ENCODE measurements at regions of chr14 and their contacts with region 1.

Region 1: GRCh38 chr14:104563742-104564615 is 15.6 kb upstream of the C14orf180 start:
- DNase-seq: peak; percentile 77 to 95
- ATAC-seq: peak; percentile 72 to 92
- H3K4me3 ChIP-seq: no peak overlapping the region
- H3K27ac ChIP-seq: peak overlapping the region in 1 of 2 experiments; percentile 56; a peak in 3 of 6 replicates
- H3K4me1 ChIP-seq: peaks cover 9% of the 10 kb centered on the region; the same call in 2 of the 3 replicates
- CTCF ChIP-seq: peak; percentile 84
- EP300 ChIP-seq: no peak
- POLR2A ChIP-seq: no peak
- RAD21 ChIP-seq: peak; percentile 95

Region 2: DNA sequence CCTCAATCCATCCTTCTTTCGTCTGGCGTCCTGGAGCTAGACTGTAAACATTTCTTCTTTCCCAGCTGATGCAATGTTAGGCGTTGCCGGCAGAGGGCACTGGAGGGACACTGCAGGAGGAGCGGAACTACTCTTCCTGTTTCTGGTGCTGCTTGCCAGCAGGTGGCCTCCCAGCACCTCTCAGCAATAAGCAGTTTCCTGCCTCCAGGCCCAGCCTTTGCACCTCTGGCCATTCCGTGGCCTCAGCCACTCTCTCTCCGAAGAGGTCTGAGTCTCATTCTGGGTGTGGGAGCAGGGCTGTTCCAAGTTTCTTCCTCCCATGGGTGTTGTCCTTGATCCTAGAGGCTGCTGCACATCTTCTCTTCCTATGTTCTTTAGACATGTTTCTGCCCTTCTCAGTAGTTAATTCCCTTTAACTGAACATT is 485.9 kb before region 1 on chr14:
- CTCF ChIA-PET with region 1: interaction called, 112 read pairs
- POLR2A ChIA-PET with region 1: no interaction called
- DNase-seq: peak; percentile 92 to 93
- ATAC-seq: peak; percentile 95 to 96
- H3K4me3 ChIP-seq: no peak overlapping the region
- H3K27ac ChIP-seq: peak overlapping the region in 1 of 2 experiments; percentile 51; a peak in 2 of 6 replicates
- H3K4me1 ChIP-seq: no peaks in the 10 kb centered on the region
- CTCF ChIP-seq: peak; percentile 99
- EP300 ChIP-seq: no peak
- POLR2A ChIP-seq: no peak
- RAD21 ChIP-seq: peak; percentile 93 to 97

Region 3: GRCh38 chr14:104094709-104095438 is 469.1 kb before region 1 on chr14:
- CTCF ChIA-PET with region 1: interaction called, 25 read pairs
- POLR2A ChIA-PET with region 1: no interaction called
- DNase-seq: peak; percentile 63 to 85
- ATAC-seq: peak; percentile 63 to 88
- H3K4me3 ChIP-seq: no peak overlapping the region
- H3K27ac ChIP-seq: no peak overlapping the region
- H3K4me1 ChIP-seq: peaks cover 5% of the 10 kb centered on the region; the same call in 2 of the 3 replicates
- CTCF ChIP-seq: peak; percentile 82
- EP300 ChIP-seq: no peak
- POLR2A ChIP-seq: no peak
- RAD21 ChIP-seq: peak; percentile 57 to 62

Region 4: DNA sequence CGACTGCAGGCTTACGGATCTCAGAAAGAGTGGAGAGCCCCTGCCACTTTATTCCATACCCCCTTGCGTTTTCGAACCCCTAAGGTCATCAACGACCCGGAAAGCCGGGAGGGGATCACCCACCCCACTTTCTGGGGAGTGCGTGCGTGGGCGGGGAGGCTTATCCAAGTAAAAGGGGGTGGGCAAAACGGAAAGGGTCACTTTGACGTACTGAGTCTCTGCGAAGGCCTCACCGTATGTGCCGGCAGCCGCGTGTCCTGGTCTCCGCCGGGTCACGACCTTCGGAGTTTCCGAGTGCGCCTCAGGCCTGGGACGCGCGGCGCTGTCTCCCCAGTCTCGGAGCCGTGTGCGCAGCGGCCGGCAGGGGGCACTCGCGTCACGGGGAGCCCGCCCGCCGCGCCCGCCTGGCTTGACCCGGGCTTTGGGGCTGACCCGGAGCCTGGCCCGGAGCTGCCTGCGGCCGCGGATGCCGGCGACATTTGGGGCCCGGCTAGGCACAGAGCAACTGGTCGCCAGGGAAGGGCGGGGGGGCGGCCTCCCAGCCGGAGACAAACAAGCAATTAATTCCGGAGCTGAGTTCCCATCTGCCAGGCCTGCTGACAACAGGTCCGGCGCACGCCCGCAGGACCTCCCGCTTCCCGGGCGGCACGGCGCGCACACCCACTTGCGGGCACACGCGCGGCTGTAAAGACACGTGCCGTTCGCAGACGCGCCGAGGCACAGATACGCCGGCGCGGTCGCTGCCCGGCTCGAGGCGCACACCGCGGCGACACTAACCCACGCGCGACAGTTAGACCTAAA is 426.5 kb before region 1 on chr14:
- CTCF ChIA-PET with region 1: interaction called, 50 read pairs
- POLR2A ChIA-PET with region 1: no interaction called
- DNase-seq: peak; percentile 76 to 80
- ATAC-seq: peak; percentile 53 to 89
- H3K4me3 ChIP-seq: peak overlapping the region; percentile 55
- H3K27ac ChIP-seq: peak overlapping the region; percentile 54 to 87
- H3K4me1 ChIP-seq: peaks cover 26% of the 10 kb centered on the region
- CTCF ChIP-seq: peak; percentile 90
- EP300 ChIP-seq: no peak
- POLR2A ChIP-seq: no peak
- RAD21 ChIP-seq: peak; percentile 74 to 94

Region 5: DNA sequence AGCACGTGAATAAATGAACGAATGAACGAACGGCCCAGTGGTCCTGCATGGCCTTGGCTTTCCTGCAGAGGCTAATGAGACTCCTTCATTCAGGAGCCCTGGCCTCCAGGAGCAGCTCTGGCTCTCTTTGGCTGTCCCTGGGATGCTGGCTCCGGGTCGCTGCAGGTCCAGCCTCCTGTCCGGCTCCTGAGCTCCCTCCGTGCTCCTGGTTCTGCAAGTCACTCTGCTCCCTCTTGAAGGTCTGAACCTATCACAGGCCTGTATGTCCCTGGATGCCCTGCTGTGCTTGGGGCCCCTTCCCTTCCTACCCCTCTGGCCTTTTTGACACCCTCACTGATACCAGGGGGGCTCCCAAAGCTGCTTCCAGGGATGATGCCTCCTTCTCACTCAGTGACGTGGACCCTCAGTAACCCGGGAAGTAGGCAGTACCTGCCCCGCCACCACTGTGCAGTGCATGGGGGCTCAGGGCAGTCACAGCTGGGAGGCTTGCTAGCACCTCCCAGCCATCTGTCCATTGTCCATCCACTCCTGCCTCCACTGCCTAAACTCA is 118.1 kb before region 1 on chr14:
- CTCF ChIA-PET with region 1: no interaction called
- POLR2A ChIA-PET with region 1: no interaction called
- DNase-seq: no peak
- ATAC-seq: no peak
- H3K4me3 ChIP-seq: no peak overlapping the region
- H3K27ac ChIP-seq: no peak overlapping the region
- H3K4me1 ChIP-seq: no peaks in the 10 kb centered on the region
- CTCF ChIP-seq: no peak
- EP300 ChIP-seq: no peak
- POLR2A ChIP-seq: no peak
- RAD21 ChIP-seq: no peak

Region 6: DNA sequence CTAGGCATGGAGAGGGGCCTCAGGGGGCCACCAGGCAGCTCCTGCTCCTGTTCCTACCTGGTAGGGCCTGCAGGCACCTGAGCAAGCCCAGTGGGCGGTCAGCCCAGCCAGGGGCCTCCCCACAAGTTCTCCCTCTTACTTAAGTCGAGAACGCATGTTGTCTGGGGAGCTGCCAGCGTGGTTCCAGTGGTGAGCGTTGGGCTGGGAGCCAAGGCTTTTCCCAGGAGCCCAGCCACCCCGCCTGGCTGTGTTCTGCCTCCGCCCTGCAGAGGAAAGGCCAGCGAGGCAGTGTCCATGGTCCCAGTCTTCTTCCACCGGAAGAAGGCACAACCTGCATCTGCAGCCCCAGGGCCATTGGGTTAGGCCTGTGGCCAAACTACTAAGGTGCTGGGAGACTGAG is 17.0 kb after region 1 on chr14:
- CTCF ChIA-PET with region 1: interaction called, 71 read pairs
- POLR2A ChIA-PET with region 1: no interaction called
- DNase-seq: no peak
- ATAC-seq: no peak
- H3K4me3 ChIP-seq: no peak overlapping the region
- H3K27ac ChIP-seq: no peak overlapping the region
- H3K4me1 ChIP-seq: peaks cover 4% of the 10 kb centered on the region; the same call in 1 of the 3 replicates
- CTCF ChIP-seq: no peak
- EP300 ChIP-seq: no peak
- POLR2A ChIP-seq: no peak
- RAD21 ChIP-seq: no peak

Region 7: DNA sequence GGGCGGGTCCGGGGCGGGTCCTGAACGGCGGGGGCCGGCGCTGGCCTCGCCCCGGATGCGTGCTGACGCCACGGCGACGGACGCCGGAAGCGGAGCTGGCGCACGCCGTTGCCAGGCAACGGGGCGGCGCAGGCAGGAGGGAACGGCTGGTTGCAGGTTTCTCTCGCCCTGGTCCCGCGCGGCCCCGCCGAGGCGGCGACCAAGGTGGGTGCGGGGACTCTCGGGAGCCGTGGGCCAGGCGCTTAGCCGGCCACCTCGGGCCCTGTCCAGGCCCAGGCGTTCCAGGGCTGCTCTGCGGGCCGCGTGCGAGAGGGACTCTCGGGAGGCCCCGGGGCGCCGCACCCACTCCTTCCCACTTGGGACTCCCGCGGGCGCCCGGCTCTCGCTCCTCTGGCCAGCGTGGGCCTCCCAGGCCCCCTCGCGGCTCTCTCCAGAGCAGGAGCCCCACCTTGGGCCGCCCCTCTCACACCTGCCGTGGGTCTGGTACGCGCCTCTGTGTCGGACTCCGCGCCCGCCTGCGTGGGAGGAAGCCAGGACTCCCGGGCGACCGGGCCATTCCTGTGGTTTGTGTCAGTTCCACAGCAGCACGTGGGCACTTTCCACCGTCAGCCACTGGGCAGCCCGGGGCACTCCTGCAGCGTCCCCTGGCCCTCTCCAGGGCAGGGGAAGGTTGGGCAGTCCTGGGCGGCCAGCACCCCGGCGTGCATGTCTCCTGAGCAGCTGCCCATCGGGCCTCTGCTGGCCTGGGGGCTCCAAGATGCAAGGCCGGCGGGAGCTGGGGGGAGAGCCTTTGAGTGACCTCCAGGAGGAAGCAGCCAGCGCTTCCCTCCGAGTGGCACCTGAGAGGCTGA is 421.9 kb after region 1 on chr14 and contains the start of gene CLBA1:
- CTCF ChIA-PET with region 1: no interaction called
- POLR2A ChIA-PET with region 1: no interaction called
- DNase-seq: peak; percentile 90 to 93
- ATAC-seq: peak; percentile 89 to 91
- H3K4me3 ChIP-seq: peak within 1 kb of the TSS; percentile 87
- H3K27ac ChIP-seq: peak within 1 kb of the TSS; percentile 89 to 96
- H3K4me1 ChIP-seq: peaks cover 16% of the 10 kb centered on the region; the same call in 2 of the 3 replicates
- CTCF ChIP-seq: no peak
- EP300 ChIP-seq: no peak
- POLR2A ChIP-seq: peak; percentile 55
- RAD21 ChIP-seq: no peak
- polyA plus RNA-seq, gene CLBA1: 11.3 and 11.5 TPM in 2 replicates